ENCODE measurements at regions of chr9 and their contacts with region 1.

Region 1: DNA sequence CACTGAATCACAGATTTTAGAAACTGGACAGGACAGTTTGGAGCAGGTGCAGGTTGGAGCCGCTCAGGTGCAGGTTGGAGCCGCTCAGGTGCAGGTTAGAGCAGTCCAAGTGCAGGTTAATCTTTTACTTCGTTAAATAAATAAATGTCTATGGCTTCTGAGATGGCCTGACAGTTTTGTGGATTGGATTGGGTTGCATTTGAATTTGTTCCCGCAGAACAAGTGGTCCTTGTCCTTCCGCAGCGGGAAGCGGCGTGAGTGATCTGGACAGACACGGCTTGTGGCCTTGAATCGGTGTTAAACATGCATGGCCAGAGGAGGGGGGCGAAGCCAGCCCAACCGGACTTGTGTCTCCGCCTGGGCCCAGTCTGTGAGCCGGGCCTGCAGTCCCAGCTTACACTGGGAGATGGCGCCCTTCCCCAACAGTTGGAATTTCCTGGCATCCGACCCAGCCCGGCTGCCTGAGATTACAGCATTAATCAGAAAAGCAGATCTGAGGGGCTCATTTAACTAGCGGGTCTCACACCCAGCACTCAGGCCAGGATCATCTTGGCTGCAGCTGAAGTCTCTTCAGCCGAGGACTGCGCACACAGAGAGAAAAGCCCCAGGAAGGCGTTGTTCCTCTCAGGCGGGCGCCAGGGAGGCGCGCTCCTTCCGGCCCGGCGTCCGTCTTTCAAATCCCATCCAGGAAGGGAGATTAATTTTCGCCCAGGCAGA is 1.5 kb upstream of the OLFM1 start:
- DNase-seq: peak; percentile 72 to 81
- ATAC-seq: peak; percentile 61 to 85
- H3K4me3 ChIP-seq: peak overlapping the region; percentile 33
- H3K27ac ChIP-seq: peak overlapping the region in 1 of 2 experiments; percentile 49; a peak in 2 of 6 replicates
- H3K4me1 ChIP-seq: peaks cover 5% of the 10 kb centered on the region; the same call in 2 of the 3 replicates
- CTCF ChIP-seq: peak; percentile 90
- EP300 ChIP-seq: no peak
- POLR2A ChIP-seq: no peak
- RAD21 ChIP-seq: peak; percentile 97

Region 2: GRCh38 chr9:134983074-134983473 is 102.9 kb before region 1 on chr9:
- CTCF ChIA-PET with region 1: no interaction called
- POLR2A ChIA-PET with region 1: no interaction called
- DNase-seq: no peak
- ATAC-seq: peak in 1 of 2 experiments; percentile 30; a peak in 1 of 6 replicates
- H3K4me3 ChIP-seq: no peak overlapping the region
- H3K27ac ChIP-seq: no peak overlapping the region
- H3K4me1 ChIP-seq: no peaks in the 10 kb centered on the region
- CTCF ChIP-seq: no peak
- EP300 ChIP-seq: no peak
- POLR2A ChIP-seq: no peak
- RAD21 ChIP-seq: peak in 1 of 2 experiments; percentile 33; a peak in 2 of 5 replicates

Region 3: GRCh38 chr9:135032868-135033460 is 53.0 kb before region 1 on chr9:
- CTCF ChIA-PET with region 1: no interaction called
- POLR2A ChIA-PET with region 1: no interaction called
- DNase-seq: no peak
- ATAC-seq: peak in 1 of 2 experiments; percentile 16; a peak in 2 of 6 replicates
- H3K4me3 ChIP-seq: no peak overlapping the region
- H3K27ac ChIP-seq: no peak overlapping the region
- H3K4me1 ChIP-seq: no peaks in the 10 kb centered on the region
- CTCF ChIP-seq: no peak
- EP300 ChIP-seq: no peak
- POLR2A ChIP-seq: no peak
- RAD21 ChIP-seq: no peak

Region 4: DNA sequence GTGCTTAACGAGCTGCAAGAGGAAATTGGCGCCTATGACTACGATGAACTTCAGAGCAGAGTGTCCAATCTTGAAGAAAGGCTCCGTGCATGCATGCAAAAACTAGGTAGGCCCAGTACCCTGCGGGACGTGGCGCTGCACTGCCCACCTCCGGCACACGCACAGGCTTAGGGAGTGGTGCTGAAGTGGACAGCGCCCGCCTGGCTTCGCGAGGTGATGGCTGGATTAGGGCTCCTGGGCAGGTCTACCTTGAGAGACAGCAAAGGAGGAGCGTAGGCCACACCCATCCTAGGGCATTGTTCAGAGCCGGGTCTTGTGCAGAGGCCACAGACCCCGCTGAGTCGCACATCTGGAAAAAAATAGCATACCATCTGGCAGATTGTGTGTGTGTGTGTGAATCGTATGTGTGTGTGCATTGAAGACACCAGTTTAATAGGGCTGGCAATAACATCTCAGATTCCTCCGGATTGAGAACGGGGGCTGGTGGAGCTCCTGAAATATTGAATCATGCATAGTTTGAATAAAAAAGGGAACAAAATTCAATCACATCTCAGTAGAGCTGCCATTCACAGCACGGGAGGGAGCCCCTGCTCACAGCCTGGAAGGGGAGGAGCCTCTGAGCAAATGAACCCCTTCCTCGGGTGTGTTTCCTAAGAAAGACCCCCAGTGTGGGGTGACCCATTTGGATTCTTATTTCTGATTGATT is 12.6 kb after region 1 on chr9:
- CTCF ChIA-PET with region 1: interaction called, 39 read pairs
- POLR2A ChIA-PET with region 1: no interaction called
- DNase-seq: no peak
- ATAC-seq: 0 out of 6 replicates have a peak, but pooled peaks of 1 of the 2 experiments have one; percentile 35
- H3K4me3 ChIP-seq: no peak overlapping the region
- H3K27ac ChIP-seq: no peak overlapping the region
- H3K4me1 ChIP-seq: no peaks in the 10 kb centered on the region
- CTCF ChIP-seq: no peak
- EP300 ChIP-seq: no peak
- POLR2A ChIP-seq: no peak
- RAD21 ChIP-seq: no peak

Region 5: GRCh38 chr9:135156525-135157510 is 70.8 kb after region 1 on chr9:
- CTCF ChIA-PET with region 1: interaction called, 19 read pairs
- POLR2A ChIA-PET with region 1: no interaction called
- DNase-seq: peak; percentile 33 to 53
- ATAC-seq: peak; percentile 55 to 65; a peak in 4 of 6 replicates
- H3K4me3 ChIP-seq: no peak overlapping the region
- H3K27ac ChIP-seq: no peak overlapping the region
- H3K4me1 ChIP-seq: peaks cover 9% of the 10 kb centered on the region; the same call in 1 of the 3 replicates
- CTCF ChIP-seq: no peak
- EP300 ChIP-seq: no peak
- POLR2A ChIP-seq: no peak
- RAD21 ChIP-seq: no peak

Region 6: DNA sequence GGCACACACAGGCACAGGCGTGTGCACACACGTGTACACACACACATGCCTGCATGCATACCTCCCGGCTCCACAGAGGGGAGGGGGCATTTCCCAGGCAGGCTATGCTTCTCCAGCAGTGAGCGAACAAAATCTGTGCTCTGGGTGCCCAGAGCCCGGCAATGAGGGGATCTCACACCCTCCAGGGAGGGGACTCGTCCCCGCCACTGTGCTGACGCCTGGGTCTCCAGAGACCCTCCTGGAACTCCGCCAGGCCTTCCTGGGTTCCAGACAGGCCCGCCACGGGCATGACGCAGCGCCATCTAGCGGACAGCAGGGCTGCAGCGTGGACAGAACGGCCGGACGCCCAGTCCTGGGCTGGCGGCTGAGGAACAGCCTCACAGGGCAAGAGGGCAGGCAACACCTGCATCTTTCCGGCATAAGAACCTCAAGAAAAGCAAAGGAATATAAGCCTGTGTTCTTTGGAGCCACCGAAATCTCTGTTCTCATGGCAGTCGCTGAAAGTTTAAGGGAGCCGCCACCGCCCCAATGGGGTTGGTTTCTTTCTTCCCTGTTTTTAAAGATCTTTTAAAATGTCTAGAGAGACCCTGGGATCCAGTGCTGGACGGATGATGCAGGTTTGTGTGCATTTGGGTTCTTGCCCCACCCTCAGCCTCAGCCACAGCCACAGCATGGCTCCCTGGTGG is 258.0 kb after region 1 on chr9:
- CTCF ChIA-PET with region 1: interaction called, 196 read pairs
- POLR2A ChIA-PET with region 1: no interaction called
- DNase-seq: peak; percentile 34 to 73
- ATAC-seq: peak; percentile 65 to 89; a peak in 4 of 6 replicates
- H3K4me3 ChIP-seq: no peak overlapping the region
- H3K27ac ChIP-seq: no peak overlapping the region
- H3K4me1 ChIP-seq: no peaks in the 10 kb centered on the region
- CTCF ChIP-seq: peak; percentile 84
- EP300 ChIP-seq: no peak
- POLR2A ChIP-seq: no peak
- RAD21 ChIP-seq: peak; percentile 82

Region 7: DNA sequence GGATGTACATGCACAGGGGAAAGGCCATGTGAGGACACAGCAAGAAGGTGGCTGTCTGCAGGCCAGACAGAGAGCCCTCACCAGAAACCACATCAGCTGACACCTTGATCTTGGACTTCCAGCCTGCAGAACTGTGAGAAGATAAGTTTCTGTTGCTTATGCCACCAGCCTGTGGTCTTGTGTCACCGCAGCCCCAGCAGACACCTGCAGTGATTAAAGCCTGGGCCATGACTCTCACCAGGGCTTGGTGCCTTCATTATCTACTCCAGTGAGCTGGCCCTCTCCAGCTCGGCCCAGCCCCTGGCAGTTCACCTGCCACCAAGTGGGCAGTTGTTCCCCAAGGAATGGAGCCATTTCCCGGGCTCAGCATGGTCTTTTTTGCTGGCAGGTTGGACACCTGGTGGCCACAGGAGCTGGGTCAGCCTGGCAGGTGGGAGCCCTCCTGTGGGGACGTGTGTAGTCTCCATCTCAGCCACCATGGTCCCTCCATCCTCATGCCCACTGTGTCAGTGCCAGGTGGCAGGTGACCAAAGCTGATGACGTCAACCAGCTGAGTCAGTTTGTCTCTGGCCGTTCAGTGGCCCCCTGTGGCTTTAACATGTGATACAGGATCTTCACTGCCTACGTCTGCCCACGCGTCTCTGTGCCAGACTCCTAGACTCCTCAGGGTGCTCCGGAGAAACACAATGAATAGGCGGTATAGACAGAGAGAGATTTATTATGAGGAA is 293.7 kb after region 1 on chr9:
- CTCF ChIA-PET with region 1: no interaction called
- POLR2A ChIA-PET with region 1: no interaction called
- DNase-seq: no peak
- ATAC-seq: no peak
- H3K4me3 ChIP-seq: no peak overlapping the region
- H3K27ac ChIP-seq: no peak overlapping the region
- H3K4me1 ChIP-seq: no peaks in the 10 kb centered on the region
- CTCF ChIP-seq: no peak
- EP300 ChIP-seq: no peak
- POLR2A ChIP-seq: no peak
- RAD21 ChIP-seq: no peak

Region 8: GRCh38 chr9:135474915-135475314 is 388.9 kb after region 1 on chr9:
- CTCF ChIA-PET with region 1: interaction called, 13 read pairs
- POLR2A ChIA-PET with region 1: no interaction called
- DNase-seq: peak; percentile 60 to 64
- ATAC-seq: peak; percentile 57 to 88; a peak in 4 of 6 replicates
- H3K4me3 ChIP-seq: no peak overlapping the region
- H3K27ac ChIP-seq: no peak overlapping the region
- H3K4me1 ChIP-seq: no peaks in the 10 kb centered on the region
- CTCF ChIP-seq: peak; percentile 46
- EP300 ChIP-seq: no peak
- POLR2A ChIP-seq: no peak
- RAD21 ChIP-seq: peak; percentile 23 to 40; a peak in 3 of 5 replicates

Measured in A549 (cell line).